PC-3 (cell line): ENCODE measurements at regions of chr13 and their contacts with region 1.

Region 1: DNA sequence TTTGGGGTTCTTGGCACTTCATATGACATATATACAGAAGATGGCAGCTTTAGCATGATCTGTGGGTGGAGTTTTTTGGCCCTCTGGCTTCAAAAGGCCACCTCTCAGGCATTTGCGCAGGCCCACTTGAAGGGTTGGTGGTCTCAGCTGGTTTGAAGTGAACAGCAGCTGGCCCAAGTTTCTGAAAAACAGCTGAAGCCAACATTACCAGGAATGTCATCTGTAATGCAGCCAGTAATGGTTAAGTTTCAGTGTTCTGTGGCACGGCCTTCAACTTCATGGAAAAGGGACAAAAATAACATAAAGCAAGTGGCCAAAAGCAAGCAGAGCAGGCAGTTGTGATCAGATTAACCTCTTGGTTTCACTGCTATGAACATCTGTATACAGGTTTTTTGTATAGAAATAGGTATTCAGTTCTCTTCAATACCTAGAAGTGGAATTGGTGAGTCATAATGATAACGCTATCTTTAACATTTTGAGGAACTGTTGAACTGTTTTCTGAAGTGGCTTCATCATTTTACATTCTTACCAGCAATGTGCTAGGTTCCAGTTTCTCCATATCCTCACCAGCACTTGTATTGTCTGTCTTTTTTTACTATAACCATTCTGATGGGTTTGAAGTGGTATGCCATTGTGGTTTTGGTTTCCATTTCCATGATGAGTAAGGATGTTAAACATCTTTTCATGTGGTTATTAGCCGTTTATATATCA is 245.4 kb downstream of the SHISA2 start:
- DNase-seq: peak; percentile 61
- ATAC-seq: no peak
- H3K4me3 ChIP-seq: no peak overlapping the region
- H3K27ac ChIP-seq: no peak overlapping the region
- H3K4me1 ChIP-seq: peaks cover 8% of the 10 kb centered on the region
- H3K27me3 ChIP-seq: peaks cover 13% of the 10 kb centered on the region
- CTCF ChIP-seq: no peak

Region 2: GRCh38 chr13:25561812-25562211 is 244.6 kb before region 1 on chr13:
- CTCF ChIA-PET with region 1: no interaction called
- POLR2A ChIA-PET with region 1: no interaction called
- intact Hi-C with region 1: no loop called
- DNase-seq: no peak
- ATAC-seq: no peak
- H3K4me3 ChIP-seq: no peak overlapping the region
- H3K27ac ChIP-seq: no peak overlapping the region
- H3K4me1 ChIP-seq: no peaks in the 10 kb centered on the region
- H3K27me3 ChIP-seq: peaks cover 66% of the 10 kb centered on the region
- CTCF ChIP-seq: no peak

Region 3: DNA sequence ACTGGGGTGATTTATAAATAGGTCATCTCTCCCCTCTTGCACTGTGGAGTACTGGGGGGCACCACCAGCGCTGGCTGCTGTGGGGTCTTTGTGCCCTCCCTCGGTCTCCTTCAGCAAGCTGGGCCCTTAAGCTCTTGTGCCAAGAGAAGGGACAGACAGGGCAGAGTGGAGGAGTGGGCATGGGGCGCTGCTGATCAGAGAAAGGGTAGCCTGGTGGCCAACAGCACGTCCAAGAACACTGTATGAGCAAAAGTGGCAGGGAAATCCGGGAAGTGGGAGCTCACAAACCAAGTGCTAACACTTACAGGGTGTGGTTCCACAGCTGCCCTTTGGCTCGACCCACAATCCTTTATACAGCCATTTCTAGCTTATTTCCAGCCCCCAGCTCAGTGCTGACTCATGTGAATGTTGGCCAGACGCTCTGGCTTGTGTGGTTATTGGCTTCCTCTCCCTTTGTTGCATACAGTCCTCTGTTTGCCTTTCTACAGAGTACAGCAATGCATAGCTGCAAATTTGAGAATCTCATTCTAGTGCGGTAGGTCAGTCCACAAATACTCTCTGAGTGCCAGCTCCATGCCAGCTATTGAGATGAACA is 53.4 kb before region 1 on chr13:
- CTCF ChIA-PET with region 1: no interaction called
- POLR2A ChIA-PET with region 1: no interaction called
- intact Hi-C with region 1: loop called (anchors 10 kb)
- DNase-seq: peak; percentile 92
- ATAC-seq: peak; percentile 100
- H3K4me3 ChIP-seq: no peak overlapping the region
- H3K27ac ChIP-seq: peak overlapping the region; percentile 78
- H3K4me1 ChIP-seq: peaks cover 17% of the 10 kb centered on the region
- H3K27me3 ChIP-seq: no peaks in the 10 kb centered on the region
- CTCF ChIP-seq: no peak